ENCODE measurements at regions of chr17 and their contacts with region 1.

Region 1: GRCh38 chr17:68205251-68205807 is 42.5 kb upstream of the AMZ2 start:
- DNase-seq: peak; percentile 78
- ATAC-seq: peak; percentile 88
- H3K4me3 ChIP-seq: peak overlapping the region; percentile 80 to 82
- H3K27ac ChIP-seq: peak overlapping the region; percentile 75
- H3K4me1 ChIP-seq: peaks cover 9 to 34% of the 10 kb centered on the region in 2 experiments; a peak in 3 of 4 replicates
- H3K27me3 ChIP-seq: no peaks in the 10 kb centered on the region
- CTCF ChIP-seq: peak; percentile 63 to 91 (median 86)
- POLR2A ChIP-seq: peak; percentile 45
- RAD21 ChIP-seq: peak; percentile 59

Region 2: DNA sequence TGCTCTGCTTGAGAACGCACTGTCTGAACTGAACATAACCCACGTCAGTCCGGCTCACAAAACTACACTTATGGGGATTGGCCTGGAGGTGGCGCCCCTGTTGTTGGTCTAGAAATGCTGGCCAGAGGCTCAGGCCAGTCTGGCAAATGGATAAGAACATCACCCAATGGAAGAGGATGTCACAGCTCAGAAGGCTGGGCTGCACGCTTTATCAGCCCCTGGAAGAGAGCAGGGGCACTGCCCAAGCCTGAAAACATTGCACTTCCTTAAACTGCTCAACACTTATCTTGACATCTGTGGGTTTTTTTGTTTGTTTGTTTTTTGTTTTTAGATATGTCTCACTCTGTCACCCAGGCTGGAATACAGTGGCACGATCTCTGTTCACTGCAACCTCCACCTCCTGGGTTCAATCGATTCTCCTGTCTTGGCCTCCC is 404.8 kb before region 1 on chr17:
- CTCF ChIA-PET with region 1: interaction called, 3 read pairs
- POLR2A ChIA-PET with region 1: no interaction called
- RAD21 ChIA-PET with region 1: no interaction called
- intact Hi-C with region 1: loop called (anchors 10 kb)
- DNase-seq: peak; percentile 83
- ATAC-seq: peak; percentile 98
- H3K4me3 ChIP-seq: no peak overlapping the region
- H3K27ac ChIP-seq: no peak overlapping the region
- H3K4me1 ChIP-seq: no peaks in the 10 kb centered on the region
- H3K27me3 ChIP-seq: no peaks in the 10 kb centered on the region
- CTCF ChIP-seq: peak; percentile 90 to 96 (median 91)
- POLR2A ChIP-seq: no peak
- RAD21 ChIP-seq: peak; percentile 94

Region 3: GRCh38 chr17:68057531-68057952 is 147.8 kb before region 1 on chr17:
- CTCF ChIA-PET with region 1: interaction called, 6 read pairs
- POLR2A ChIA-PET with region 1: no interaction called
- RAD21 ChIA-PET with region 1: interaction called in 1 of 2 experiments, 3 read pairs
- intact Hi-C with region 1: loop called (anchors 10 kb)
- DNase-seq: peak; percentile 32
- ATAC-seq: peak; percentile 89
- H3K4me3 ChIP-seq: no peak overlapping the region
- H3K27ac ChIP-seq: no peak overlapping the region
- H3K4me1 ChIP-seq: peaks cover 0 to 11% of the 10 kb centered on the region in 2 experiments; a peak in 2 of 4 replicates
- H3K27me3 ChIP-seq: no peaks in the 10 kb centered on the region
- CTCF ChIP-seq: peak; percentile 55 to 72 (median 63)
- POLR2A ChIP-seq: no peak
- RAD21 ChIP-seq: peak; percentile 73

Region 4: DNA sequence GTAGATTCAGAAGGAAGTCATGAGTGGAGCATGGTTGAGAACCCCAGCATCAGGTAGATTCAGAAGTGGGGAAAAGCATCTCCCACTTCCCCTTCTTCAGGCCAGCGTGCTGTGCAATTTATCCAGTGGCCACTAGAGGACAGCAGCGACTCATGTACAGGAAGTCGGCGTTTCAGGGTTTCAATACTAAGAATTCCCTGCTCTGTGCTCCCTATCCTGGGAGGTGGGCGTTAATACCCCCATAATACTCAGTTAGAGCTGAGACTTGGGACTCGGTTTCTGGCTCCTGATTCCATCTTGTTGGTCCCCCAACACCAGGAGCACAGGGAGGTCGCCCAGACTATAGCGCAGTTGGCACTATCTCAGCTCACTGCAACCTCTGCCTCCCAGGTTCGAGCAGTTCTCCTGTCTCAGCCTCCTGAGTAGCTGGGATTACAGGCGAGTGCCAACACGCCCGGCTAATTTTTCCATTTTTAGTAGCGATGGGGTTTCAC is 32.8 kb before region 1 on chr17:
- CTCF ChIA-PET with region 1: interaction called, 21 read pairs
- POLR2A ChIA-PET with region 1: interaction called, 3 read pairs
- RAD21 ChIA-PET with region 1: interaction called, 6 to 10 read pairs
- intact Hi-C with region 1: loop called (anchors 1 kb)
- DNase-seq: peak; percentile 63
- ATAC-seq: peak; percentile 88
- H3K4me3 ChIP-seq: no peak overlapping the region
- H3K27ac ChIP-seq: no peak overlapping the region
- H3K4me1 ChIP-seq: peaks cover 0 to 12% of the 10 kb centered on the region in 2 experiments; a peak in 3 of 4 replicates
- H3K27me3 ChIP-seq: no peaks in the 10 kb centered on the region
- CTCF ChIP-seq: peak; percentile 97 to 100 (median 99)
- POLR2A ChIP-seq: no peak
- RAD21 ChIP-seq: peak; percentile 100

Region 5: DNA sequence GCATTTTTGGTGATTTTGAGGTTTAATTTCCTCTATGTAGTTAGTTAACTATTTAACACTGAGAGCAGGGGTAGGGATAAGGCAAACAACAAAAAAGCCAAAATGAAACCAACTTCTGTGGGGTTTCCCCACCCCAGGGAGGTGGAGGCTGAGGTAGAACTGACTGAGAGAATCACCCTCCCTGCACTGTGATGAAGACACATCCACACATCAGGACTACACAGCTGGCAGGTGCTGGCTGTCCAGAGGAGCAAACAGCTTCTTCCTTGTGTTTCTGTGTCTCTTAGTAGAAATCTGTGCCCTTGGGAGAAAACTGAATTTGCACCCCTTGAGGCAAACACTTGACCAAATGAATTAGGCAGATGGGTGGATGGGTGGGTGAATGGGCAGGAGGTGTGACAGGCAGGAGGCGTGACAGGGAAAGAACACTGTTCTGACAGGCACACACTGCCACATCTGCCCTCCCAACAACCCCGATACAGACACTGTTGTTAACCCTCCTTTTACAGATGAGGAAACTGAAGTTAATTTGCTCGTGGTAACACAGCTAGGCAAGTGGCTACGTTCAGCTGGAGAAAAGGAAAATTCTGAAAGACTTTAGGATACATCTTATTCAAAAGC is 20.4 kb before region 1 on chr17:
- CTCF ChIA-PET with region 1: interaction called, 23 read pairs
- POLR2A ChIA-PET with region 1: interaction called, 7 read pairs
- RAD21 ChIA-PET with region 1: no interaction called
- intact Hi-C with region 1: no loop called
- DNase-seq: no peak
- ATAC-seq: peak; percentile 27
- H3K4me3 ChIP-seq: peak overlapping the region; percentile 27 to 51
- H3K27ac ChIP-seq: peak overlapping the region; percentile 86
- H3K4me1 ChIP-seq: peaks cover 44 to 58% of the 10 kb centered on the region in 2 experiments
- H3K27me3 ChIP-seq: no peaks in the 10 kb centered on the region
- CTCF ChIP-seq: no peak
- POLR2A ChIP-seq: no peak
- RAD21 ChIP-seq: no peak

Region 6: GRCh38 chr17:68247445-68248198 is 42.3 kb after region 1 on chr17 and contains the start of gene AMZ2:
- CTCF ChIA-PET with region 1: interaction called, 5 read pairs
- POLR2A ChIA-PET with region 1: interaction called, 3 read pairs
- RAD21 ChIA-PET with region 1: no interaction called
- intact Hi-C with region 1: loop called (anchors 1 kb)
- DNase-seq: peak; percentile 88
- ATAC-seq: peak; percentile 95
- H3K4me3 ChIP-seq: peak within 1 kb of the TSS; percentile 62 to 67
- H3K27ac ChIP-seq: peak within 1 kb of the TSS; percentile 91
- H3K4me1 ChIP-seq: peaks cover 14 to 29% of the 10 kb centered on the region in 2 experiments; a peak in 3 of 4 replicates
- H3K27me3 ChIP-seq: no peaks in the 10 kb centered on the region
- CTCF ChIP-seq: no peak
- POLR2A ChIP-seq: peak; percentile 96
- RAD21 ChIP-seq: peak; percentile 5; the same call in 1 of the 2 replicates
- total RNA-seq, gene AMZ2: 131 TPM

Region 7: GRCh38 chr17:68356520-68356919 is 151.2 kb after region 1 on chr17:
- CTCF ChIA-PET with region 1: no interaction called
- POLR2A ChIA-PET with region 1: no interaction called
- RAD21 ChIA-PET with region 1: no interaction called
- intact Hi-C with region 1: no loop called
- DNase-seq: no peak
- ATAC-seq: no peak
- H3K4me3 ChIP-seq: no peak overlapping the region
- H3K27ac ChIP-seq: no peak overlapping the region
- H3K4me1 ChIP-seq: peaks cover 23 to 36% of the 10 kb centered on the region in 2 experiments
- H3K27me3 ChIP-seq: no peaks in the 10 kb centered on the region
- CTCF ChIP-seq: no peak
- POLR2A ChIP-seq: no peak
- RAD21 ChIP-seq: no peak

Measured in HCT116 (cell line).